CD4-positive, alpha-beta memory T cell (primary cell): ENCODE measurements at regions of chr3 and their contacts with region 1.

Region 1: DNA sequence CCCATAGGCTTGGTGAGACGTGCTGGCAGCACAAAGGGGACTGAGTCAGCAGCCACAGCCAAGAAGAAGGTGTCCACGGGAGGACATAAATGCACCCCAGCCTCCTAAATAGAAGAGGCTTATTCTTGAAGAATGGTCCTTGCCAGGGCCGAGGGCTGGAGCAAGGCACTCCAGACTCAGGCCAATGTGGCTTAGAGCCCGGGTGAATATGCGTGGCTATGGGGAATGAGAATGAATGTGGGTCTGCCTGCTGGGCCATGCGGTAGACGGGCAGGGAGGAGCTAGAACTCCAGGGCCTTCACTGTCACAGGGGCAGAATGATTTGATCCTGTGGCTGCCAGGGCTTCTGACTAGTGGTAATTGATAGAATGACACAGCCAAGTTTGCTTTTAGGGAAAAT is 34.0 kb downstream of the DHX30 start:
- DNase-seq: no peak
- H3K4me3 ChIP-seq: no peak overlapping the region
- H3K4me3 Mint-ChIP-seq: no peak overlapping the region
- H3K27ac ChIP-seq: no peak overlapping the region
- H3K27ac Mint-ChIP-seq: peak overlapping the region in 4 of 7 donors; percentile 2 to 52 (median 28)
- H3K4me1 ChIP-seq: no peaks in the 10 kb centered on the region
- H3K4me1 Mint-ChIP-seq: peaks cover 0 to 16% (median 5%) of the 10 kb centered on the region in 4 donors
- H3K27me3 ChIP-seq: no peaks in the 10 kb centered on the region
- H3K27me3 Mint-ChIP-seq: no peaks in the 10 kb centered on the region

Region 2: GRCh38 chr3:47802734-47803477 is 34.1 kb before region 1 on chr3 and contains the start of gene DHX30:
- CTCF ChIA-PET with region 1: no interaction called
- POLR2A ChIA-PET with region 1: no interaction called
- intact Hi-C with region 1: no loop called
- DNase-seq: peak; percentile 81 to 90 (median 84)
- H3K4me3 ChIP-seq: peak within 1 kb of the TSS; percentile 95 to 97
- H3K4me3 Mint-ChIP-seq: peak within 1 kb of the TSS; percentile 93 to 97 (median 95)
- H3K27ac ChIP-seq: peak within 1 kb of the TSS; percentile 90
- H3K27ac Mint-ChIP-seq: peak within 1 kb of the TSS; percentile 91 to 98 (median 97)
- H3K4me1 ChIP-seq: peaks cover 27% of the 10 kb centered on the region
- H3K4me1 Mint-ChIP-seq: peaks cover 15 to 27% (median 22%) of the 10 kb centered on the region in 4 donors
- H3K27me3 ChIP-seq: no peaks in the 10 kb centered on the region
- H3K27me3 Mint-ChIP-seq: no peaks in the 10 kb centered on the region
- total RNA-seq, gene DHX30: 86.5 to 93.0 TPM

Region 3: GRCh38 chr3:47989981-47990440 is 153.0 kb after region 1 on chr3:
- CTCF ChIA-PET with region 1: interaction called, 38 read pairs
- POLR2A ChIA-PET with region 1: interaction called, 5 read pairs
- intact Hi-C with region 1: loop called (anchors 1 kb)
- DNase-seq: peak; percentile 69 to 75 (median 73)
- H3K4me3 ChIP-seq: no peak overlapping the region
- H3K4me3 Mint-ChIP-seq: no peak overlapping the region
- H3K27ac ChIP-seq: no peak overlapping the region
- H3K27ac Mint-ChIP-seq: peak overlapping the region in 1 of 7 donors; percentile 87
- H3K4me1 ChIP-seq: no peaks in the 10 kb centered on the region
- H3K4me1 Mint-ChIP-seq: peaks cover 2 to 7% (median 5%) of the 10 kb centered on the region in 4 donors
- H3K27me3 ChIP-seq: no peaks in the 10 kb centered on the region
- H3K27me3 Mint-ChIP-seq: no peaks in the 10 kb centered on the region

Region 4: GRCh38 chr3:48151058-48151806 is 314.2 kb after region 1 on chr3:
- CTCF ChIA-PET with region 1: interaction called, 13 read pairs
- POLR2A ChIA-PET with region 1: no interaction called
- intact Hi-C with region 1: no loop called
- DNase-seq: peak in 4 of 5 donors; percentile 39 to 51 (median 44)
- H3K4me3 ChIP-seq: no peak overlapping the region
- H3K4me3 Mint-ChIP-seq: no peak overlapping the region
- H3K27ac ChIP-seq: no peak overlapping the region
- H3K27ac Mint-ChIP-seq: no peak overlapping the region
- H3K4me1 ChIP-seq: no peaks in the 10 kb centered on the region
- H3K4me1 Mint-ChIP-seq: no peaks in the 10 kb centered on the region
- H3K27me3 ChIP-seq: no peaks in the 10 kb centered on the region
- H3K27me3 Mint-ChIP-seq: peaks cover 2% of the 10 kb centered on the region in 2 donors